Activated naive CD4-positive, alpha-beta T cell treated with anti-CD3 and anti-CD28 coated beads for 36 hours (primary cell): ENCODE measurements at regions of chr19 and their contacts with region 1.

Region 1: GRCh38 chr19:18000935-18001778 is 6.8 kb upstream of the ARRDC2 start:
- DNase-seq: peak; percentile 95
- H3K4me3 Mint-ChIP-seq: peak overlapping the region; percentile 87
- H3K27ac Mint-ChIP-seq: peak overlapping the region; percentile 97
- H3K4me1 Mint-ChIP-seq: peaks cover 19% of the 10 kb centered on the region
- H3K27me3 Mint-ChIP-seq: no peaks in the 10 kb centered on the region

Region 2: GRCh38 chr19:17932485-17933338 is 68.4 kb before region 1 on chr19 and contains the start of gene CCDC124:
- CTCF ChIA-PET with region 1: interaction called, 186 read pairs
- intact Hi-C with region 1: no loop called
- DNase-seq: peak; percentile 95
- H3K4me3 Mint-ChIP-seq: peak within 1 kb of the TSS; percentile 95
- H3K27ac Mint-ChIP-seq: peak within 1 kb of the TSS; percentile 96
- H3K4me1 Mint-ChIP-seq: peaks cover 25% of the 10 kb centered on the region
- H3K27me3 Mint-ChIP-seq: no peaks in the 10 kb centered on the region
- total RNA-seq, gene CCDC124: 107 to 118 TPM

Region 3: GRCh38 chr19:17947815-17948513 is 53.2 kb before region 1 on chr19:
- CTCF ChIA-PET with region 1: interaction called, 38 read pairs
- intact Hi-C with region 1: loop called (anchors 1 kb)
- DNase-seq: peak; percentile 94
- H3K4me3 Mint-ChIP-seq: peak overlapping the region; percentile 58
- H3K27ac Mint-ChIP-seq: no peak overlapping the region
- H3K4me1 Mint-ChIP-seq: peaks cover 49% of the 10 kb centered on the region
- H3K27me3 Mint-ChIP-seq: peaks cover 35% of the 10 kb centered on the region

Region 4: DNA sequence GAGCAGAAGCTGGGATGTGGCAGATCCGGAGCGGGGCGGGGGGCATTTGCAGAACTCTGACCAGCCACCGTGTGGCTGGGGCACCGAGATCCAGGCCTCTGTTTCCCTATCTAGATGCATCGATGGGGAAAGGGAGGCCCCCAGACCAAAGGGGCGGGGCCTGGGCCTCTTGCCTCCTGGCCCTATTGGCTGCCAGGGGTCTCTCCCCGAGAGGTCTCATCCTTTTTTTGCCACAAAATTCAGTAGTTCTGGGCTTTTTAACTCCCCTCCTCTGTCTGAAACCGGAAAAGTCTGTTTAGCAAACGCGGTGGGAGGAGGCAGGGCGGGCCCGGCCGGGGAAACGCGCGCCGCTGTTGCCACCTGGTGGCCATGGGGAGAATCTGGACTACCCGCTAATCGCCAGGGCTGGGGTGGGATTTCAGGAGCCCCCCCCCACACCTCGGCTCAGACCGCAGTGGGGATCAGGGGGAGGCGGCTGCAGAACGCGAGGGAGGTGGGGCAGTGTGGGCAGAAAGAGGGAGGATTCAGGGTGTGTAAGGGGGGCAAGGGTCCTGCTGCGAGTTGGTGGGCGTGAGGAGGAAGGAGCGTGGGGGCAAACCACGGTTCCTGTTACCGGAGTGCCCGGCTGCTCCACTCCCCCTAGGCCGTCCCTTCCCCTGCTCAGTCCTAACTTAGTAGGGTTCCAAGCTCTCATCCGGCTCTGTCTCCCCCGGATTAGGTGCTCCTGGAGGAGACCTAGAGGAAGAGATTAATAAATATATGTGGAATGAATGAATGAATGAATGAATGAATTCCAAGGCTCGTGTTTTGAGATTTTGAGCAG is 57.3 kb after region 1 on chr19:
- CTCF ChIA-PET with region 1: interaction called, 148 read pairs
- intact Hi-C with region 1: loop called (anchors 1 kb)
- DNase-seq: peak; percentile 86
- H3K4me3 Mint-ChIP-seq: no peak overlapping the region
- H3K27ac Mint-ChIP-seq: peak overlapping the region; percentile 59
- H3K4me1 Mint-ChIP-seq: peaks cover 11% of the 10 kb centered on the region
- H3K27me3 Mint-ChIP-seq: no peaks in the 10 kb centered on the region

Region 5: DNA sequence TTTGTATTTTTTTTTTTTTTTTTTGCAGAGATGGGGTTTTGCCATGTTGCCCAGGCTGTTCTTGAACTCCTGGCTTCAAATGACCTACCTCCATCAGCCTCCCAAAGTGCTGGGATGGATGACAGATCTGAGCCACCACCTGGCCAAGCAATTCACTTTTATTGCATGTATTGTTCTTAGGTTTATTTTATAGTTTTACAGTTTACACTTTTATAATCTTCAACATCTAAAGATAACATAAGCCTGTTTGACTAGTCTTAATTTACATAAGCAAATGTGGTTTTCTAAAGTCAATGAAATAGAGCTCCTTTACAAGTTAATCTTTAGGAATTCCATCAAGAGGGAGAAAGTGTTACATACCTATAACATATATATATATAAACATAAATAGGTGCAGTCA is 182.4 kb after region 1 on chr19:
- CTCF ChIA-PET with region 1: no interaction called
- intact Hi-C with region 1: no loop called
- DNase-seq: no peak
- H3K4me3 Mint-ChIP-seq: no peak overlapping the region
- H3K27ac Mint-ChIP-seq: no peak overlapping the region
- H3K4me1 Mint-ChIP-seq: no peaks in the 10 kb centered on the region
- H3K27me3 Mint-ChIP-seq: no peaks in the 10 kb centered on the region